Right cardiac atrium (tissue), 5 donors: ENCODE measurements at regions of chr13 and their contacts with region 1.

Region 1: DNA sequence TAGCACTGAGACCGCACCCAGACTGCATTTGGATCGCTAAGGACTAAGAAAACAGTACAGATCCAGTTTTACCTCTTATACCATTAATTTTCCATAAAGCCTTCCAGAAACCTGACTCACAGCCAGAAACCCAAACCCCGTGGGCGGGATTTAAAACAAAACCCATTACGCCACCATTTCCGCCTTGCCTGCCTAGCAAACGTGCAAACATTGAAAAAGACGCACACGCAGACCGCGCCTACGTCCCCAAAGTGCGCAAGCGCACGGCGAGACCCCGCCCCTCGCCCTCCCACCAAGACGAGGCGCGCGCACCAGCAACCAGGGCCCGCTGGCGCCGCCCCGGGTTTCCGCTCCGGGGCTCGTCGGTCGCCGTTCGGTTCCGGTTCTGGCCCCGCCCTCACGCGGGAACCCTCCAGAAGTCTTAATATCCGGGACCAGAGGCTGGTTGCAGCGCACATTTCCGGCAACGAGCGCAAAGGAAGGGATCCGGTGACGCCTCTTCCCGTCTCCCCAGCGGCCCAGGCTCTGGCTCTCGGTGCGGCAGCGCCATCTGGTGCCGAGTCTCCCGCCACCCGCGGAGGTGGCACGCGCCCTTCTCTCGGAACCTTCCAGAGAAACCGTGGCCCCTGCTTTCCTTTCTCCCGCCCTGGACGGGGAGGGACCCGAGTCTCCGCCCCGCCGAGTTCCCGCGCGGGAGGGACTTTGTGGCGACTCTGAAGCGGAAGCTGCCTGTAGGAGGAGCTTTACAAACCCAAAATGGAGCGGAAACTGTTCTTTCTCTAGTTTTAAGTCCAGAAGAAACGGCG is 256.9 kb upstream of the STARD13 start:
- DNase-seq: peak; percentile 99 to 100 (median 99)
- ATAC-seq: peak; percentile 97
- H3K4me3 ChIP-seq: peak overlapping the region; percentile 58
- H3K27ac ChIP-seq: peak overlapping the region; percentile 98
- H3K4me1 ChIP-seq: no peaks in the 10 kb centered on the region
- H3K27me3 ChIP-seq: no peaks in the 10 kb centered on the region

Region 2: GRCh38 chr13:32586080-32586900 is 956.2 kb before region 1 on chr13 and contains the start of gene PDS5B:
- intact Hi-C with region 1: loop called in 1 of 4 experiments (anchors 5 kb)
- DNase-seq: peak; percentile 95 to 98 (median 98)
- ATAC-seq: peak; percentile 97 to 98
- H3K4me3 ChIP-seq: peak within 1 kb of the TSS; percentile 100
- H3K27ac ChIP-seq: peak within 1 kb of the TSS; percentile 96
- H3K4me1 ChIP-seq: no peaks in the 10 kb centered on the region
- H3K27me3 ChIP-seq: no peaks in the 10 kb centered on the region
- total RNA-seq, gene PDS5B: 22.3 to 30.7 (median 27.3) TPM

Region 3: GRCh38 chr13:33110713-33111413 is 431.6 kb before region 1 on chr13:
- intact Hi-C with region 1: loop called in 1 of 4 experiments (anchors 5 kb)
- DNase-seq: peak; percentile 73 to 88 (median 88)
- ATAC-seq: peak; percentile 72 to 79
- H3K4me3 ChIP-seq: no peak overlapping the region
- H3K27ac ChIP-seq: peak overlapping the region; percentile 60
- H3K4me1 ChIP-seq: peaks cover 17% of the 10 kb centered on the region
- H3K27me3 ChIP-seq: no peaks in the 10 kb centered on the region

Region 4: DNA sequence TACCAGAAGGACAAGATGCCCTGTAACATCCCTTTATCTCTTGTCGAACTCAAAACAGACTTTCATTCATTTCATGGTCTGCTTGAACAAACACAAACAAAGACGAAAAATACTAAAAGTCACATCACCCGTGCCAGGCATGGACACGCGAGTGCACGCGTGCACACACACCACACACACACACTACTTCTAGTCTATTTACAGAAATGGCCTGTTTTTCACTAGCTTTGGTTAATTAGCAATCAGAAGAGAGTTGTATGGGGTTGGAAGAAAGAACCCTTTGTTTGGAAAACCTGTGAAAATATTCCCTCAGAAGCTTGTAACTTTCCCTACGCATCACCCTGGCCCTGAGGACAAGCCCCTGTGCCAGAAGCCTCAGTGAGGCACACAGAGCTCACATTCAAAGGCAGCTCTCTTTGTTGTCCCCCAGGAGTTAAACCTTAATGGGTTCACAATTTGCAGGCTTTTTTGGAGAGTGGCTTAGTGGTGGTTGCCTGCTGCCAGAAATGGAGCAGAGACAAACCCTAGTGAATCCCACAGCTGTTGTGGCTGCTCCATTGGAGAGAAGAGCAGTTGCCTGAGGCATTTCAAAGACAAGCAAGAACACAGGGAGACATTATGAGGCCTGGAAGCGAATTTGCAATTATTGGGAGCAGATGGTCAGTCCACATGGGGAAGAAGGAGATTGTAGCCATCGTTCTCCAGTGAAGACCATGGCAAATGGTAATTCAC is 312.9 kb before region 1 on chr13:
- intact Hi-C with region 1: loop called in 1 of 4 experiments (anchors 10 kb)
- DNase-seq: peak; percentile 41 to 74 (median 48)
- ATAC-seq: peak; percentile 47 to 71
- H3K4me3 ChIP-seq: no peak overlapping the region
- H3K27ac ChIP-seq: peak overlapping the region; percentile 64
- H3K4me1 ChIP-seq: peaks cover 22% of the 10 kb centered on the region
- H3K27me3 ChIP-seq: no peaks in the 10 kb centered on the region

Region 5: DNA sequence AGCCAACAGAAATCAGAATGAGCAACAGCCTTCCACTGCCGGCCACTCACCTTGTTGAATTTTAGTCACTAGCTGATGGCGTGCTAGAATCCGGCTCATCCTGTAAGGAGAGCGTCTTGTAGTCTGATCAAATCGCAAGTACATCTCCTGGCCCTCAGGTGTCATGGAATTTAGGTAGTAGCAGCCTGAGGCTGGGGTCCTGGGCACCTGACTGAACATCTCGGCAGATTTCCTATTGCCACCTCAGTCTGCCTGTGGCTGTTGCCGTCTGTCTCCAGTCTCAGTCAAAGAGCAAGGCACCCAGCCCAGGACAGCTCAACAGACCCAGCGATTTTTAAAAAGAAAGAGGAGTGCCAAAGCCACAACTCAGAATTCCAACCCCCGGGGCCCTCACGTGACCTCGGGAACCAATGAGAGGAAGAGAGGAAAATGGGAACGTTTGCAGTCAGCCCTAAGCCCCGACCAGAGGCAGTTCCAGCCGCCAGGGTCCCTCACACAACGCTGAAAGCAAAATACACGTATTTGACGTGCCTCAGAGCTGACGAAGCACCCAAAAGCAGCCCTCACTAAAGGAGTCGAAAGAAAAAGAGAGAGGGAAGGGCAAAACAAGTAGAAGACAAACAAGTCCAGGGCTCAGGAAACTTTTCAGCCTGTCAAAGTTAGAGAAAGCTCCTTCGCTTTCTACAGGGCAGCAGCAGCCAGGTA is 256.9 kb before region 1 on chr13 and contains the start of gene STARD13:
- intact Hi-C with region 1: loop called in 1 of 4 experiments (anchors 5 kb)
- DNase-seq: peak; percentile 94 to 97 (median 95)
- ATAC-seq: peak; percentile 97 to 98
- H3K4me3 ChIP-seq: peak within 1 kb of the TSS; percentile 85
- H3K27ac ChIP-seq: peak within 1 kb of the TSS; percentile 96
- H3K4me1 ChIP-seq: peaks cover 3% of the 10 kb centered on the region
- H3K27me3 ChIP-seq: no peaks in the 10 kb centered on the region
- total RNA-seq, gene STARD13: 26.1 to 35.7 (median 30.7) TPM

Region 6: DNA sequence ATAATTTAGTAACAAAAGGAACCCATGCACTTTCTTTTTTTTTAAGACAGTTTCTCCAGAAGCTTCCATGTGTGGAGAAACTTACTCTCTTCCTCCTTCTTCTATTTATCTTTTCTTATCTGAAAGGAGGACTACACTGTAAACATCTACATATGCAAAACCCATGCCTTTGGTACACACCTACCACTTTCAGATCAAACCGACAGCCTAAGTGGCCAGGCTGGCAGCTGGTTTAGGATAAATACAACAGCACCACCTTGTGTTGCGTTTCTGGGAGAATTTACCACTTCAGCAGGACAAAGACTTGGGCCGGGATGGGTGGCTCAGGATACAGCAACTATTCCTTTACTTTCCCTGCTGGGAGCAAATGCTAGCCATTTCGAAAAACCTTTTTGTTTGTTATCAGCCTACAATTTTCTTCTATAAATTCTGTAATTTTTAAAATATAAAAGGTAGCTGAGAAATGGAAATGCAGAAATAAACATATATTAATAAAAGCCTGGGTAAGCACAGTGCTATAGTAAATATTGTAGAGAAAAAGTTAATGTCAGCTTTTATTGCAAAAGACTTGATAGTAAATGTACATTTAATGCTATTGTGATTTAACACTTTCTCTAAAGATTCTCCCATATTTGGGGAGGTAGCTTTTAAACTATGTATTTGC is 181.4 kb after region 1 on chr13:
- intact Hi-C with region 1: loop called in 2 of 4 experiments (anchors 5 kb)
- DNase-seq: peak; percentile 68 to 82 (median 69)
- ATAC-seq: peak; percentile 82 to 84
- H3K4me3 ChIP-seq: no peak overlapping the region
- H3K27ac ChIP-seq: no peak overlapping the region
- H3K4me1 ChIP-seq: peaks cover 2% of the 10 kb centered on the region
- H3K27me3 ChIP-seq: no peaks in the 10 kb centered on the region

Region 7: DNA sequence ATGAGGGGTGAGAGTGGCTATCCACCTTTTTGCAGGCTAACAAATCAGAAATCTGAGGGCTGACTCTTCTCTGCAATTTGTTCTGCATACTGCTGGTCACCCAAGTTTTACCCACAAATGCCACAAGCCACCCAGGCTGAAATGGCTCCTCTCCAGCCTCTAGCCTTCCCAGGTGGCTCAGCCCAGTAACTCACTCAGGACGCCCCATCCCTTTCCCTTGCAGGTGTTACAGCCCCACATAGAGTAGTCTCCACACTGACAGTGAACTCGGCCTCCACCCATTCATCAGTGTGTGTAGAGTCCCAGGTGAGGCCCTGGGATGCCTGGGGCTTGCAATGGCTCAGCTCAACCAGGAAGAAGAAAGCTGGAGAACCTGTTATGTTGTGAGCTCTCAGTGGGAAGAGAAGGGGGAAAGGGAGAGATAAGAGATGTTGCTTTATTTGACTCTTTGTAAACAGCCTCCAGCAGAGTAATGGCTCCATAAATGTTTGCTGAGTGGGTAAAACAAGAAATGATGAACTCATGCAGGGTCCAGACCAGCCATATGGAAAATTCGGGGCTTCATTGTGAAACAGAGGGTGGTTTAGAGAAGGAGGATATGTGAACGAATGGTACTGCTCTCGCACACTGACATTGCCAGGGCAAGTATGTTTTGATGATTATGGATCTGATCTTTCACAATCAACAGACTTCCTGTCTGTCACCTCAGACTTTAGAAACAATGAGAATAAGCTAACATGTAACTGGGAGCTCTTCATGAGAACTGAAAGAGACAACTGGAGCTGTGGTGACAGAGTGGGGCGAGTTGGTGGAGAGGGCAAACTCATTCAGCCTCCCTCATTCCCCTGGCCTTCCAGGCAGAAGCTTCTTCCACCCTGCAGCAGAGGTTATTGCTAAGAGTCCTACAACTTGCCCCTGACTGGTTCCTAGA is 201.2 kb after region 1 on chr13:
- intact Hi-C with region 1: no loop called
- DNase-seq: no peak
- ATAC-seq: no peak
- H3K4me3 ChIP-seq: no peak overlapping the region
- H3K27ac ChIP-seq: no peak overlapping the region
- H3K4me1 ChIP-seq: no peaks in the 10 kb centered on the region
- H3K27me3 ChIP-seq: no peaks in the 10 kb centered on the region